OCI-LY7 (cell line): ENCODE measurements at regions of chr18 and their contacts with region 1.

Region 1: DNA sequence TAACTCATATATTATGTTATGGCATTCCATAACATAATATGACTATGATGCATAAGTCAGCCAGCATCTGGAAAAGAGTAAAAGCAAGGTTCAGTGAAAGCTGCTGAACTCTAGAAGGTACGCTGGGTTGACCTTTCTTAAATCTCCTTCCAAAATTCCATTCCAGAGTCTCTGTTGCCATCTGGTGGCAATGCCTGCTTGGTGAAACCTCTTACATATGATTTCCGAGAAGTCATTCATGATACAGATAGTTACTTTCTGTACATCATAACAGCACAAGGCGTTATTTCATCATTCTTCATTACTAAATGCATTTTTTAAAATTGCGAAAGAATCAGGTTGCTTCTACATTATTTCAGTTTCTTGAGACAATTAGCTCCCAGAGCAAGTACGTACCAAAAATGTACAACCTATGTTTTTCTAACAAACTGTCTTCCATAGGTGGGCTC is 7.0 kb upstream of the EPG5 start:
- DNase-seq: peak; percentile 59
- H3K4me3 ChIP-seq: no peak overlapping the region
- H3K27ac ChIP-seq: no peak overlapping the region
- H3K4me1 ChIP-seq: no peaks in the 10 kb centered on the region
- CTCF ChIP-seq: peak; percentile 76

Region 2: DNA sequence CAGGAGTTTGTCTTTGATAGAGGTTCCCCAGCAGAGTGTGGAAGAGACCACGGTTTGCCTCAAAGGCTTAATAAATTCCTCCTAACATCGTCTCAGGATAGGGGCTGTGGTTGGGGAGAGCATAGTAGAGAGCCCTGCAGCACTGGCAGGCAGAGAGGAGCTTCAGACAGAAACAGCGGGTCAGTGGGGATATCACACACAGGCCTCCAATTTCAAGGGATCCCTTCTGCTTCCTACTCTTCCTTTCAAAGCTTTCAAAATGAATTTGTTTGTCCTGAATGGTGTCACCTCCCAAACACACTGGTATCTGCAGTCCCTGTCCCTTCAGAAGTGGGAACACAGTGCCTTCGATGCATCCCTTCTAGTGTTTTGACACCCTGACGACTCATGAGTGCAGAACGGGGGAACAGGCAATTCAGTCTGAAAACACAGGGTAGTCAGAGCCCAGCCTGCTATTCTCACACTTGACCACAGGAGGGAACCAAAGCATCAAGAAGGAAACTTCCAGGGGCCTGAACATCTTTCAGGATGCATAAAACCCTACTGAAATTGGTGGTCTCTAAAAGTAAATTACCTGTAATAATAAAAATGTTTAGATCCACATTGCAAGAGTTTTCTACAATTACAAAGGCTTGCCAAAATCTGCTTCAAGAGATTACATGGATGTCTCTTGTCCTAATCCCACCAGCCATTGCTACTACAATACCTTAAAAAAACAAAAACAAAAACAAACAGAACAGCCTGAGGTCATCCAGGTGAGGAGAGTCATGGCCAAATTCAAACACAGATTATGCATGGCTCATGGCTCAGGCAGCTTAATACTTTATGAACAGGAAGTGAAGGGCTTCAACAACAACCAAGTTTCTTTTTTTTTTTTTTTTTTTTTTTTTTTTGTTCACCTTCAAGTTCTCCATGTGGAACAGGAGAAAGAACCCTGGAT is 309.0 kb before region 1 on chr18:
- CTCF ChIA-PET with region 1: no interaction called
- POLR2A ChIA-PET with region 1: no interaction called
- intact Hi-C with region 1: loop called (anchors 1 kb)
- DNase-seq: peak; percentile 48
- H3K4me3 ChIP-seq: no peak overlapping the region
- H3K27ac ChIP-seq: no peak overlapping the region
- H3K4me1 ChIP-seq: no peaks in the 10 kb centered on the region
- CTCF ChIP-seq: peak; percentile 76

Region 3: GRCh38 chr18:45690975-45691815 is 282.9 kb before region 1 on chr18:
- CTCF ChIA-PET with region 1: no interaction called
- POLR2A ChIA-PET with region 1: no interaction called
- intact Hi-C with region 1: loop called (anchors 2 kb)
- DNase-seq: peak; percentile 30
- H3K4me3 ChIP-seq: no peak overlapping the region
- H3K27ac ChIP-seq: no peak overlapping the region
- H3K4me1 ChIP-seq: no peaks in the 10 kb centered on the region
- CTCF ChIP-seq: peak; percentile 78

Region 4: GRCh38 chr18:45722899-45723298 is 251.2 kb before region 1 on chr18:
- CTCF ChIA-PET with region 1: no interaction called
- POLR2A ChIA-PET with region 1: no interaction called
- intact Hi-C with region 1: loop called (anchors 2 kb)
- DNase-seq: peak; percentile 49
- H3K4me3 ChIP-seq: no peak overlapping the region
- H3K27ac ChIP-seq: no peak overlapping the region
- H3K4me1 ChIP-seq: no peaks in the 10 kb centered on the region
- CTCF ChIP-seq: peak; percentile 71

Region 5: GRCh38 chr18:46073474-46074331 is 99.6 kb after region 1 on chr18:
- CTCF ChIA-PET with region 1: no interaction called
- POLR2A ChIA-PET with region 1: no interaction called
- intact Hi-C with region 1: loop called (anchors 2 kb)
- DNase-seq: peak; percentile 29
- H3K4me3 ChIP-seq: no peak overlapping the region
- H3K27ac ChIP-seq: no peak overlapping the region
- H3K4me1 ChIP-seq: no peaks in the 10 kb centered on the region
- CTCF ChIP-seq: peak; percentile 74

Region 6: GRCh38 chr18:46158498-46158897 is 184.4 kb after region 1 on chr18:
- CTCF ChIA-PET with region 1: no interaction called
- POLR2A ChIA-PET with region 1: no interaction called
- intact Hi-C with region 1: no loop called
- DNase-seq: no peak
- H3K4me3 ChIP-seq: no peak overlapping the region
- H3K27ac ChIP-seq: no peak overlapping the region
- H3K4me1 ChIP-seq: no peaks in the 10 kb centered on the region
- CTCF ChIP-seq: no peak

Region 7: GRCh38 chr18:46609048-46609447 is 634.9 kb after region 1 on chr18:
- CTCF ChIA-PET with region 1: no interaction called
- POLR2A ChIA-PET with region 1: no interaction called
- intact Hi-C with region 1: no loop called
- DNase-seq: no peak
- H3K4me3 ChIP-seq: no peak overlapping the region
- H3K27ac ChIP-seq: no peak overlapping the region
- H3K4me1 ChIP-seq: no peaks in the 10 kb centered on the region
- CTCF ChIP-seq: no peak